Tibial artery (tissue), 4 donors: ENCODE measurements at regions of chr11 and their contacts with region 1.

Region 1: DNA sequence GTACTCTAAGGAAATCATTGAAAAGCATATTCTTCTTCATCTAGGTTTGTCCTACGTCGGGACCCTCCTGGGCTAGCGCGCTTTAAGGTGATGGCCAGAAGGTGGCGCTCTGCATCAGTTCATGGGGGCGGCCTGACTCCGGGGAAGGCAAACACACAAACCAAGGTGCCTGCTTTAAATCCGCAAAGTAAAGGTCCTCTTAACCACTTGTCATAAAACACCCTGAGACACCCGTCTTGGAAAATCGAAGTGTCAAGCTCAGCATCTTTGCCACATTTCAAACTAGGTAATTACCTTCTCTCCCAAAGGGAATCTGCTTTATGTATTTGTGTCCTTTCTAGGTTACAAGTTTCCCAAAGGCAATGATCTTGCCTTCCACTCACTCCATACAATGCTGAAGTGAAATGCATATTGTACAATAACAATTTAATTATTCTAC is 33.9 kb downstream of the LMO2 start:
- DNase-seq: peak; percentile 74 to 77
- H3K4me3 ChIP-seq: no peak overlapping the region
- H3K27ac ChIP-seq: no peak overlapping the region
- H3K4me1 ChIP-seq: no peaks in the 10 kb centered on the region
- H3K27me3 ChIP-seq: peaks cover 0 to 26% of the 10 kb centered on the region in 2 donors
- CTCF ChIP-seq: peak; percentile 62 to 78

Region 2: DNA sequence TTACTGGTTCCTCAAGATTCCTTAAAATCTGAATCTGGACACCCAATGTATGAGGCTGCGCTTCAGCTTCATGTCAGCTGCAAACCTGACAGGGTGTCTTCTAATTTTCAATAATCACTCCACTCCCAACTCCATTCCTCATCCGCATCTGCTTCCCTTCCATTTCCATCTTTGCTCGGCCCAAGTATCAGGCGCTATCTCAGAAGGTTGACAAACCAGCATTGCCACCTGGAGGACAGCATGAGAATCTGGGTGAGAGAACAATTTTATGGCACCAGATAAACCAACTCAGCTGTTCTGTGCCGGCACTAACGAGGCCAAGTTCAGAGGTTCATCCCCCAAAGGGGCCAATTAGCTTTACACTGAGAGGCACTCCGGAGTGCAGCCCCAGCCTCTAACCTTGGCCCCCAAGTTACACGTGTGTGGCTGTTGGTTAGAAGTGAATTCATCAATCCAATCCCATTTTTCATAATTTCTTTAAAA is 113.1 kb after region 1 on chr11:
- intact Hi-C with region 1: loop called (anchors 10 kb)
- DNase-seq: peak in 1 of 2 donors; percentile 65
- H3K4me3 ChIP-seq: no peak overlapping the region
- H3K27ac ChIP-seq: no peak overlapping the region
- H3K4me1 ChIP-seq: no peaks in the 10 kb centered on the region
- H3K27me3 ChIP-seq: peaks cover 0 to 6% of the 10 kb centered on the region in 2 donors
- CTCF ChIP-seq: peak; percentile 38 to 65

Region 3: GRCh38 chr11:34086554-34087283 is 228.8 kb after region 1 on chr11:
- intact Hi-C with region 1: no loop called
- DNase-seq: no peak
- H3K4me3 ChIP-seq: no peak overlapping the region
- H3K27ac ChIP-seq: no peak overlapping the region
- H3K4me1 ChIP-seq: no peaks in the 10 kb centered on the region
- H3K27me3 ChIP-seq: no peaks in the 10 kb centered on the region
- CTCF ChIP-seq: no peak